ENCODE measurements at regions of chr18 and their contacts with region 1.

Region 1: GRCh38 chr18:59402432-59403090 is 43.5 kb upstream of the LMAN1 start:
- DNase-seq: peak; percentile 17
- H3K4me3 ChIP-seq: no peak overlapping the region
- CTCF ChIP-seq: peak; percentile 97

Region 2: DNA sequence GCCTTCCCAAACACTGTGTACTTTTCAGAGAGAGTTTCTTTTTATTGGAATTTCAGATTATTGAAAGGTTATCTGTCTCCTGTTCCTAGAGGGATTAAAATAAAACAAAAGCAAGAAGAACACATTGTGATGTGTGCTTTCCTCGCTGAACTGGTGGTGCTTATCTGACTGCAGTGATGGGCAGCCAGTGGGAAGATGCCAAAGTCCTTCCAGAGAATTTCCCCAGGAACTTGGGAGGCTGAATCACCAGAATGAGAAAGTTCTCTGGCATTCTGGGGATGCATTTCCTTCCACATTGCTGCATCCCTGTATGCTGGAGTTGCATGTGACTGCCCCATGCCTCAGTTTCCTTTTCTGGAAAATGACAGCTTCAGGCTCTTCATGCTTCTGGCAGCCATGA is 316.8 kb before region 1 on chr18:
- CTCF ChIA-PET with region 1: interaction called, 58 read pairs
- POLR2A ChIA-PET with region 1: no interaction called
- DNase-seq: peak; percentile 17
- H3K4me3 ChIP-seq: no peak overlapping the region
- CTCF ChIP-seq: no peak

Region 3: GRCh38 chr18:59249205-59249774 is 153.3 kb before region 1 on chr18:
- CTCF ChIA-PET with region 1: interaction called, 230 read pairs
- POLR2A ChIA-PET with region 1: no interaction called
- DNase-seq: no peak
- H3K4me3 ChIP-seq: no peak overlapping the region
- CTCF ChIP-seq: peak; percentile 65

Region 4: GRCh38 chr18:59300676-59301285 is 101.8 kb before region 1 on chr18:
- CTCF ChIA-PET with region 1: interaction called, 50 read pairs
- POLR2A ChIA-PET with region 1: no interaction called
- DNase-seq: no peak
- H3K4me3 ChIP-seq: no peak overlapping the region
- CTCF ChIP-seq: no peak

Region 5: GRCh38 chr18:59376351-59376935 is 26.1 kb before region 1 on chr18:
- CTCF ChIA-PET with region 1: interaction called, 24 read pairs
- POLR2A ChIA-PET with region 1: no interaction called
- DNase-seq: no peak
- H3K4me3 ChIP-seq: no peak overlapping the region
- CTCF ChIP-seq: no peak